ENCODE measurements at regions of chr6 and their contacts with region 1.

Region 1: GRCh38 chr6:110999634-111000270 is 17.9 kb downstream of the RPF2 start:
- DNase-seq: peak in 1 of 2 experiments; percentile 42
- H3K4me3 ChIP-seq: no peak overlapping the region
- H3K27ac ChIP-seq: no peak overlapping the region
- H3K4me1 ChIP-seq: no peaks in the 10 kb centered on the region
- H3K27me3 ChIP-seq: no peaks in the 10 kb centered on the region
- CTCF ChIP-seq: peak; percentile 78

Region 2: DNA sequence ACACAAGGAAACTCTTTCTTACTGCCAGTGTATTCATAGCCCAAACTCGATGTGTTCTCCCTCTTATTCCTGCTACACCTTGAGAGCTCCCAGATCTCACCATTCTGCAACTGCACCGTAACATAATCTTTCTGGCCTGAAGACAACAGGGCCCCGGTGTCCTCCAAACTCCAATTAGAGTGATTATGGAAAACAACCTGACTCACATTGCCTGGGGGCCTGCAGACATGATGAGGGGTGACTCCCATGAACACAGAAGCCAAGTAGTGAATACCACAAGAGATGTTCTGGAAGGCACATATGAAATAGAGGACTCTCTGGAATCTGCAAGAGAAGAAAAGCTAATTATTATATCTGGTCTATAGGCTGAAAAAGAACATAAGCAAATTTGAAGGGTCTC is 543.1 kb before region 1 on chr6:
- CTCF ChIA-PET with region 1: no interaction called
- POLR2A ChIA-PET with region 1: no interaction called
- intact Hi-C with region 1: no loop called
- DNase-seq: no peak
- H3K4me3 ChIP-seq: no peak overlapping the region
- H3K27ac ChIP-seq: no peak overlapping the region
- H3K4me1 ChIP-seq: no peaks in the 10 kb centered on the region
- H3K27me3 ChIP-seq: no peaks in the 10 kb centered on the region
- CTCF ChIP-seq: no peak

Region 3: DNA sequence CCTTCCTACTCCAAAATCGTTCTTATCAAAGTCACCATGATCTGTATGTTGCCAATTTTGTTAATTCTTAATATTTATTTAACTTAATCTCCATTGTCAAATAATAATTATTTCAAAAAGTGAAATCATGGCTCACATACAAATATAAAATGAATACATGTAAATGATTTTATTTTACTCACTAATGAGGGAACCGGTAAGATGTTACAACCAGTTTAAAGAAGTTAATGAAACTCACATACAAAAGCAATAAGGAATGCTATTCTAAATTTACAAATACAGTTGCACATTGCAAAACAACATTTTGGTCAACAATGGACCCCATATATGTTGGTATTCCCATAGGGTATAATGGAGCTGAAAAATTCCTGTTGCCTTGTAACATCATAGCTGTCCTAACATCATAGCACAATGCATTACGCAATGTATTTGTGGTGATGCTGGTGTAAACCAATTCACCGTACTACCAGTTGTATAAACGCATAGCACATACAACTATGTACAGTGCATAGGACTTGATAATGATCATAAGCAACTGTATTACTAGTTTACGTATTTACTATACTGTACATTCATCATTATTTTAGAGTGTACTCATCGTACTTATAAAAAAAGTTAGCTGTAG is 516.9 kb before region 1 on chr6:
- CTCF ChIA-PET with region 1: no interaction called
- POLR2A ChIA-PET with region 1: no interaction called
- intact Hi-C with region 1: loop called (anchors 1 kb)
- DNase-seq: no peak
- H3K4me3 ChIP-seq: no peak overlapping the region
- H3K27ac ChIP-seq: no peak overlapping the region
- H3K4me1 ChIP-seq: peaks cover 17% of the 10 kb centered on the region
- H3K27me3 ChIP-seq: no peaks in the 10 kb centered on the region
- CTCF ChIP-seq: no peak

Region 4: DNA sequence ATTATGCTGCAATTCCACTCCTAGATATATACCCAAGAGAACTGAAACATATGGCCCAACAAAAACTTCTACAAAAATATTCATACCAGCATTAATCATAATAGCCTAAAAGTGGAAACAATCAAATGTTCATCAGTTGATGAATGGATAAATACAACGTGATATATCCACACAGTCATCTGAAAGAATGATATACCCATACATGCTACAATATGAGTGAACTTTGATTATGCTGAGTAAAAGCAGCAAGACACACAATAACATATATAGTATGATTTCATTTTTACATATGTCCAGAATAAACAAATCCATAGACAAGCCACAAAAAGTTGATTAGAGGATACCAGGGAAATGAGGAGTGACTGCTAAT is 215.2 kb before region 1 on chr6:
- CTCF ChIA-PET with region 1: interaction called, 10 read pairs
- POLR2A ChIA-PET with region 1: no interaction called
- intact Hi-C with region 1: no loop called
- DNase-seq: no peak
- H3K4me3 ChIP-seq: no peak overlapping the region
- H3K27ac ChIP-seq: no peak overlapping the region
- H3K4me1 ChIP-seq: no peaks in the 10 kb centered on the region
- H3K27me3 ChIP-seq: no peaks in the 10 kb centered on the region
- CTCF ChIP-seq: no peak

Measured in PC-9 (cell line).